OCI-LY7 (cell line): ENCODE measurements at regions of chr3 and their contacts with region 1.

Region 1: GRCh38 chr3:40009991-40010390 is 200.6 kb downstream of the MYRIP start:
- DNase-seq: no peak
- H3K4me3 ChIP-seq: no peak overlapping the region
- H3K27ac ChIP-seq: no peak overlapping the region
- H3K4me1 ChIP-seq: no peaks in the 10 kb centered on the region
- CTCF ChIP-seq: no peak

Region 2: DNA sequence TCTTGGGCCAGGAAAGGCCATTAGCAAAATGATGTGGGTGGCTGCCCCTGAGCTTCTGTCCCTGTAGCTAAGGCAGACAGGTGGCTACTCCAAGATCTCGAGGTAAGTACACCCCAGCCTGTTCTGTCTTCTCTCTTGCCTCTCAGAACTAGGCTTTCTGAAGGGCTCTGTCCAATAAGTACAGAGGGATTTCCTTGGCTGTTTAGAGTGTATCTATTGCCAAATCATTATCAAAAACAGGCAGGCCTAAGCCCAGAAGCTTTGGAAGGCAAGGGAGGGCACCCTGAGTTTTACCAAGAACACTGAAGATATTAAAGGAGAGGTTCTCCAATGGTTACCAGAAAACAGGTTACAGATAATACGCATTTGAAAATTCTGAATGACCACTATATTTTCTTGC is 44.0 kb before region 1 on chr3:
- CTCF ChIA-PET with region 1: no interaction called
- POLR2A ChIA-PET with region 1: no interaction called
- intact Hi-C with region 1: no loop called
- DNase-seq: no peak
- H3K4me3 ChIP-seq: no peak overlapping the region
- H3K27ac ChIP-seq: no peak overlapping the region
- H3K4me1 ChIP-seq: no peaks in the 10 kb centered on the region
- CTCF ChIP-seq: no peak

Region 3: DNA sequence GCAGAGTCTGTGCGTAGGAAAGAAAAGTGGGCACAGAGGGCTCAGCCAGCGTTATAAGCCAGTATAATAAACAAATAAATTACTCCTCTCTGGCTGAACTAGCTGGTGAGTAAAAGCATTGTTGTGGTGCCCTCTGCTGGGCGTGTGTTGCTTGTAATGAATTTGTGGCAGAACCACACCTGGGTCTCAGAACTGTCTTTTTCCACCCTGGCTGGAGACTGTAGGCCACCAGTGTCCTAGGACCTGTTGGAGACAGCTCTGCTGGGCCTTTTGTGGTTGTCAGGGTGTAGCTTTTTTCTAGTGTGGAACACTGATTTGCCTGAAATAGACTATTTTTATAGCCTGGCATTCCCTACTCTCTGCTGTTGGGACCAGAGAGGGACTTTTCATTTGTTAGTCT is 169.0 kb after region 1 on chr3:
- CTCF ChIA-PET with region 1: no interaction called
- POLR2A ChIA-PET with region 1: no interaction called
- intact Hi-C with region 1: loop called (anchors 5 kb)
- DNase-seq: peak; percentile 50
- H3K4me3 ChIP-seq: no peak overlapping the region
- H3K27ac ChIP-seq: no peak overlapping the region
- H3K4me1 ChIP-seq: no peaks in the 10 kb centered on the region
- CTCF ChIP-seq: peak; percentile 78